Panc1 (cell line): ENCODE measurements at regions of chr16 and their contacts with region 1.

Region 1: DNA sequence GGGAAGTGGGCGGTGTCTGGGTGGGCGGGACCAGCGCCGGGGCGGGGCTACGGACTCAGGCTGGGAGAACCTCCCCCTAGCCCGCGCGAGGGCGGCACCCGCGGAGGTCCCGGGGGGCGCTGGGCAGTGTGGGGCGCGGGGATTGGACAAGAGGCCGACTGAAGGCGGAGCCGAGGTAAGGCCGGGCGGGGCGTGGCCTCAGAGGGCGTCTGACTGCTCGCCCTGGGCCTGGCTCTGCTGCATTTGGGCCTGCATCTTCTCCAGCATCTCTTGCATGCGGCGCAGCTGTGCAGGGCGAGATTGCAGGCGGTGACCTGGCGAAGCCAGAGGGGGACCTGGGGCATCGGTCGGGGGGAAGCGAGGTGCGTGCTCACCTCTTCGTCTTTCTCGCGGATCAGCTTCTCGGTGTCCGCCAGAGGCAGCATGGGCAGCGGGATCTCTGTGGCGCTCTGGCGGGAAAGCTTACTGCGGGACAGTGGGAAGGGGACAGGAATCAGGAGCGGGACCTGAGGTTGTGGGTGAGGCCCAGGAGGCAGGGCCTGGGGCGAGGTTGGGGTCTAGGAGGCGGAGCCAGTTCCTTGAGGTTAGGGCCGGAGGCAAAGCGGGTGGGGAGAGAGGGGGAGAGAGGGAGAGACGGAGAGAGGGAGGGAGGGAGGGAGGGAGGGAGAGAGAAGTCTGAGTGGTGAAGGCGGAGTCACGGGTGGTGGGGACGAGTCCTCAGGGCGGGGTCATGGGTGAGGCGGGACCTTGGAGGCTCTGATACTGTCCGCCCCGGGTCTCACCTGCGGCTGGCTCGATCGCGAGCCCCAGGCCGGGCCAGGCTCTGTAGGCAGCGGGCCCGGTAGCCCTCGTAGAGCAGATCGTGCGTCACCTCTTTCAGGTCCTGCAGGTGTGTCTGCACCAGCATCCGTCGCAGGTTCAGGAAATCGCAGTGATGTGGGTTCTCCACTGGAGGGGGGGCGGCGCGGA is 3.8 kb downstream of the SEPTIN1 start:
- DNase-seq: no peak
- ATAC-seq: peak; percentile 96
- H3K4me3 ChIP-seq: peak overlapping the region; percentile 89 to 96
- H3K27ac ChIP-seq: peak overlapping the region; percentile 90
- H3K4me1 ChIP-seq: peaks cover 7% of the 10 kb centered on the region
- H3K27me3 ChIP-seq: no peaks in the 10 kb centered on the region
- CTCF ChIP-seq: no peak

Region 2: GRCh38 chr16:30356401-30357369 is 21.8 kb before region 1 on chr16:
- CTCF ChIA-PET with region 1: no interaction called
- POLR2A ChIA-PET with region 1: interaction called, 13 read pairs
- in situ Hi-C with region 1: no loop called
- intact Hi-C with region 1: no loop called
- DNase-seq: no peak
- ATAC-seq: no peak
- H3K4me3 ChIP-seq: peak overlapping the region; percentile 98 to 99; a peak in 3 of 4 replicates
- H3K27ac ChIP-seq: peak overlapping the region; percentile 99
- H3K4me1 ChIP-seq: peaks cover 46% of the 10 kb centered on the region
- H3K27me3 ChIP-seq: no peaks in the 10 kb centered on the region
- CTCF ChIP-seq: no peak